ENCODE measurements at regions of chr12 and their contacts with region 1.

Region 1: DNA sequence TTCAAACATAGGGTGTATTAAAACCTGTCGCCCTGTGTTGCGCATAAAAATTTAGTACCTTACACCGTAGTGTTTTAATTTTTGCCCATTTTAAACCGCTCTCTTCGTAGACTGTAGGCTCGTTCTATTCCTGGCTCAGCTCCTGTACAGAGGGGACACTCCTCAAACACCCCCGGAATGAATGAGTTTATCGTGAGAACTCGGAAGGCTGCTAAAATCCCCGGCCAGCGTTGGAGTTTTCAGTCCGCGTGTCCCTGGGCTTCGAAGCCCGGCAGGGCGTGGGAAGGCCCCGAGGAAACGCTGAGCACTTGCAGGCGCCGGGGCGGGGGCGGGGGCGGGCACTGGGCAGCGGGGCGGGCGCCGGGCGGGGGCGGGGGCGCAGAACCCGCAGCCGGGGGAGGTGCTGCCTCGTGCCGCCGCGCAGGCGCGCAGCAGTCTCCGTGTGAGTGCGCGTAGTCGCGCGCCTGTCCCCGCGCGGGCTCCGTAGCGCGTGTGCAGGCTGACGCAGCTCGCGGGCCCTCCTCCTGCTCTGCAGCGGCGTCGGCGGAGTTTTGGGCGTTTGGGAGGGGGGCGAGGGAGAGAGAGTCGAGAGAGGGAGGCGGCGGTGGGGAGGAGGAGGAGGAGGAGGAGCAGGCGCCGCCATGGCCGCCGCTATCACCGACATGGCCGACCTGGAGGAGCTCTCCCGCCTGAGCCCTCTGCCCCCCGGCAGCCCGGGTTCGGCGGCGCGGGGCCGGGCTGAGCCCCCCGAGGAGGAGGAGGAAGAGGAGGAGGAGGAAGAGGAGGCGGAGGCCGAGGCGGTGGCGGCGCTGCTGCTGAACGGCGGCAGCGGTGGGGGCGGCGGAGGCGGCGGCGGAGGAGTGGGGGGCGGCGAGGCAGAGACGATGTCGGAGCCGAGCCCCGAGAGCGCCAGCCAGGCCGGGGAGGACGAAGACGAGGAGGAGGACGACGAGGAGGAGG is at the start of gene AEBP2:
- DNase-seq: peak; percentile 71 to 97
- H3K4me3 ChIP-seq: peak within 1 kb of the TSS; percentile 87 to 93
- H3K27ac ChIP-seq: peak within 1 kb of the TSS; percentile 96 to 99
- H3K4me1 ChIP-seq: peaks cover 10 to 14% of the 10 kb centered on the region in 2 donors
- H3K27me3 ChIP-seq: no peaks in the 10 kb centered on the region
- CTCF ChIP-seq: no peak
- total RNA-seq, gene AEBP2: 29.6 TPM

Region 2: DNA sequence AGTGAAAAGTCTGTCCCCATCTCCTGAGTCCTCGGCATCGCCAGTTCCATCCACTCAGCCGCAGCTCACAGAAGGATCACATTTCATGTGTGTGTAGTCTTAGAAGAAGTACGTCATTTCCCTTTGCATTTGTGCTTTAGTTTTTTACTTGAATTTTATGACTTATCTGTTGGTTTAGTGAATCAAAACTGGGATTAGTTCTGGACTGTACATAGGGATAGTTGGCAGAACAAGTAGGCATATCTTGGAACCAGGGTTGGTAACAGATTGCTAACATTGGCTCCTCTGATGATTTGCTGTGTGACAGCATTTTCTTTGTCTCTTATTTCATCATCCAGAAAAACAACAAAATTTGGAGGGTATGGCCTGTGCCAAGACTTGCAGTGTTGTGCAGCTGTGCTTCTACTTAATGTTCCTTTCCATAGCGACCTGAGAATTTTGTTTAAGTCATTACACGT is 69.6 kb before region 1 on chr12:
- intact Hi-C with region 1: loop called (anchors 2 kb)
- DNase-seq: peak; percentile 14 to 72
- H3K4me3 ChIP-seq: peak overlapping the region in 1 of 2 donors; percentile 5
- H3K27ac ChIP-seq: peak overlapping the region; percentile 45 to 74
- H3K4me1 ChIP-seq: no peaks in the 10 kb centered on the region
- H3K27me3 ChIP-seq: no peaks in the 10 kb centered on the region
- CTCF ChIP-seq: no peak

Region 3: GRCh38 chr12:19410211-19410610 is 29.1 kb before region 1 on chr12:
- intact Hi-C with region 1: loop called (anchors 1 kb)
- DNase-seq: no peak
- H3K4me3 ChIP-seq: peak overlapping the region in 1 of 2 donors; percentile 20
- H3K27ac ChIP-seq: peak overlapping the region; percentile 86 to 91
- H3K4me1 ChIP-seq: peaks cover 4 to 30% of the 10 kb centered on the region in 2 donors
- H3K27me3 ChIP-seq: no peaks in the 10 kb centered on the region
- CTCF ChIP-seq: no peak

Measured in ascending aorta (tissue), 2 donors.